Gastrocnemius medialis (tissue), 4 donors: ENCODE measurements at regions of chr17 and their contacts with region 1.

Region 1: DNA sequence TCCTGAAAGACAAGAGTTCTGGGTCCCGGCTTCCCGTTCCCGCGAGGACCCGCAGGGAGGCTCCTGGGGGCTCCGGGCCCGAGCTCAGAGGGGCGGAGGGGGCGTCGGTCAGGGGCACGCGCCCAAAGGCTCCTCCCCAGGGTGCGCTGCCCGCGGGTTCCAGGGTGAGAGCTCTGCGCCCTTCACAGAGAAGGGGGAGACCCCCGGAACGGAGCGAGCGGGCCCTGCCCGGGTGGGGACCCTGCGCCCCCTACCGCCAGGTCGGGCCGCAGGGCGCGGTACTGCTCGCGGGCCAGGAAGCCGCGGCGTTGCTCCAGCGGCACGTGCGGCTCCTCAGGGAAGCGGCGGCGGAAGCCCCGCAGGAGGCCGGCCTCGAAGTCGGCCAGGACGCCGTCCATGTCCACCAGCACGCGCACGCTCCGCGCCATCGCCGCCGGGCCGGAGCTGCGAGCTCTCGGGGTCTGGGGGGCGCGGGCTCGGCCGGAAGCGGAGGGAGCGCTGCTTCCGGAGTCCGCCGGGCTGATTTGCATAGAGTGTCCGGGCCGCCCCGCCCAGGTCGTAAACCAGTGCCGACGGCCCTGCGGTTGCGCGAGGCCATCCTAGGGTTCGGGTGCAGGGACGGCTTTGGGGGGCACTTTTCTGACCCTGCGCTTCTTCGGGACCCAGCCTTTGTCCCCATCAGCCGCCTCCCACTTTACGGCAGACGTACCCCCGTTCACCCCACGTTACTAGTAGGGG is at the start of gene NT5C:
- DNase-seq: peak; percentile 62 to 77
- ATAC-seq: peak; percentile 90 to 91
- H3K4me3 ChIP-seq: peak within 1 kb of the TSS; percentile 78 to 92 (median 90)
- H3K27ac ChIP-seq: peak within 1 kb of the TSS; percentile 86 to 96 (median 90)
- H3K4me1 ChIP-seq: peaks cover 0 to 12% of the 10 kb centered on the region in 2 donors
- H3K27me3 ChIP-seq: no peaks in the 10 kb centered on the region
- CTCF ChIP-seq: peak; percentile 74 to 82 (median 76)
- POLR2A ChIP-seq: peak; percentile 36 to 72
- total RNA-seq, gene NT5C: 62.8 to 111 (median 68.0) TPM

Region 2: GRCh38 chr17:74877592-74878548 is 253.6 kb before region 1 on chr17:
- in situ Hi-C with region 1: no loop called
- intact Hi-C with region 1: no loop called
- DNase-seq: no peak
- ATAC-seq: no peak
- H3K4me3 ChIP-seq: no peak overlapping the region
- H3K27ac ChIP-seq: no peak overlapping the region
- H3K4me1 ChIP-seq: peaks cover 5 to 6% of the 10 kb centered on the region in 2 donors
- H3K27me3 ChIP-seq: no peaks in the 10 kb centered on the region
- CTCF ChIP-seq: no peak
- POLR2A ChIP-seq: no peak

Region 3: DNA sequence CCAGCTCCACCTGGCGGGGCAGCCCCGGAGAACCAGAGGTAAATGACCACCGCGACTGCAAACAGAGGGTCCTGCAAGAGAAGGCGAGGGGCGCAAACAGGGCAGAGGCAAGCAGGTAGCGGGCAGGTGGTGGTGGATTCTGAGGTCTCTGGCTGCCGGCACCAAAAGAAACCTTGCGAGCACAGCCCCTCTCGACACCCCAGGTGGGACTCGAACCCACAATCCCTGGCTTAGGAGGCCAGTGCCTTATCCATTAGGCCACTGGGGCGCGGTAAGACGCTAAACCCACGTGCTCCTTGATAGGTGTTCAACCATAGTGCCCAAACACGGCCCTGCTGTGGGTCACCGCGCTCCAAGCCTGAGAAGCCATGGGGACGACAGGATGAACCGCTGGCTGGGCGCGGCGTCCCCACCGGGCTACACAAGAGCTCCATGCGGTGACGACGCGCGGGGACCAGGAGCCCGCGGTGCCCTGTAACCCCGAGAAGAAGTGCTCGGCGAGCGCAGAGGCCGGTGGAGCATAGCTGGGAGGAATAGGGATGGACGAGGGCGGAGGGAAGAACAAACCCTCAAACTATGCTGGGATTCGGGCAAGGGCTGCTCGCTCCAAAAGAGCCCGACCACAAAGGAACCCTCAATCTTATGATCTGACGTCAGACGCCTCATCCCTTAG is 97.1 kb before region 1 on chr17:
- in situ Hi-C with region 1: no loop called
- intact Hi-C with region 1: no loop called
- DNase-seq: peak; percentile 58 to 77
- ATAC-seq: peak; percentile 64 to 68
- H3K4me3 ChIP-seq: peak overlapping the region; percentile 68 to 81 (median 74)
- H3K27ac ChIP-seq: peak overlapping the region; percentile 79 to 88 (median 85)
- H3K4me1 ChIP-seq: peaks cover 11 to 25% of the 10 kb centered on the region in 2 donors
- H3K27me3 ChIP-seq: no peaks in the 10 kb centered on the region
- CTCF ChIP-seq: peak in 1 of 5 experiments; percentile 14
- POLR2A ChIP-seq: no peak

Region 4: DNA sequence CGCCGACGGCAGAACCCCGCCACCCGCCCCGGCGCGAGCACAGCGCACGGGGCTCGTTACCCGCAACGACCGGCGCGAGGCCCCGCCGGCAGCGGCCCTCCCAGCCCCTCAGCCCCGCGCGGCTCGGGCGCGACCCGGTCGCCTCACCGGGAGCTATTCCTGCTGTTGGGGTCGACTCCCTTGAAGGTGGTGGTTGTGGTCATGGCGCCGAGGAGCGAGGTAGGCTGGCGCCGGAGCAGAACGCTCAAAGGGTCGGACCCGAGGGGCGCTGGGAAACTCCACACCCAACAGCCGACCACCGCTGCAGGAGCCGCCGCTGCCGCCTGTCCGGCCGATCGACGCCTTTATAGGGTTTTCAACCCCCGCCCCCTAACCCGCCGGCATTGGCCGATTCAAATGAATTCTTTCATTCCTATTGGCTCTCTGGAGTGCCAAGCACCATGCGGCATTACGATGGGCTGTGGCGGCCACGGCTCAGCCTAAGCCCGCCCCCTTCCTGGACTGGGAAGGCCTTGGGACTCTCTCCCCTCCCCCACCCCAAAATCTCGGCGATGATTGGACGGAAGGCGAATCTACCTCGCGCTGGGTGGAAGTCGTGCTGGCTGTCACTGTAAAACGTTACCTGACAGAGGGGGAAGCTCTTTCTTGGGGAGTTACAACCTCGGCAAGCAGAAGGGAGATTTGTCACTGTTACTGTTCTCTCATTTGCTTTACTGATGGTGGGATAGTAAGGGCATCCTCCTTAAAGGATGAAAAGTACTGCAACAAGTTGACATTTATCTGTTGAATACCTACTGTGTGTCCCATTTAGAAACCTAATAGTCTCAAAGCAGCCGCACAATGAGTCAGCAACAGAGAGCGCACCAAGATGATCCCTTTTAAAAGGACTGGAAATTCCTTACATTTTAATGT is 23.0 kb after region 1 on chr17 and contains the start of gene JPT1:
- in situ Hi-C with region 1: no loop called
- intact Hi-C with region 1: loop called (anchors 2 kb)
- DNase-seq: peak; percentile 99
- ATAC-seq: peak; percentile 95 to 99
- H3K4me3 ChIP-seq: peak within 1 kb of the TSS; percentile 65 to 83 (median 74)
- H3K27ac ChIP-seq: peak within 1 kb of the TSS; percentile 70 to 89 (median 83)
- H3K4me1 ChIP-seq: peaks cover 19 to 21% of the 10 kb centered on the region in 2 donors
- H3K27me3 ChIP-seq: no peaks in the 10 kb centered on the region
- CTCF ChIP-seq: peak in 2 of 5 experiments; percentile 13 to 22
- POLR2A ChIP-seq: peak; percentile 98 to 100
- total RNA-seq, gene JPT1: 35.5 to 113 (median 71.8) TPM

Region 5: DNA sequence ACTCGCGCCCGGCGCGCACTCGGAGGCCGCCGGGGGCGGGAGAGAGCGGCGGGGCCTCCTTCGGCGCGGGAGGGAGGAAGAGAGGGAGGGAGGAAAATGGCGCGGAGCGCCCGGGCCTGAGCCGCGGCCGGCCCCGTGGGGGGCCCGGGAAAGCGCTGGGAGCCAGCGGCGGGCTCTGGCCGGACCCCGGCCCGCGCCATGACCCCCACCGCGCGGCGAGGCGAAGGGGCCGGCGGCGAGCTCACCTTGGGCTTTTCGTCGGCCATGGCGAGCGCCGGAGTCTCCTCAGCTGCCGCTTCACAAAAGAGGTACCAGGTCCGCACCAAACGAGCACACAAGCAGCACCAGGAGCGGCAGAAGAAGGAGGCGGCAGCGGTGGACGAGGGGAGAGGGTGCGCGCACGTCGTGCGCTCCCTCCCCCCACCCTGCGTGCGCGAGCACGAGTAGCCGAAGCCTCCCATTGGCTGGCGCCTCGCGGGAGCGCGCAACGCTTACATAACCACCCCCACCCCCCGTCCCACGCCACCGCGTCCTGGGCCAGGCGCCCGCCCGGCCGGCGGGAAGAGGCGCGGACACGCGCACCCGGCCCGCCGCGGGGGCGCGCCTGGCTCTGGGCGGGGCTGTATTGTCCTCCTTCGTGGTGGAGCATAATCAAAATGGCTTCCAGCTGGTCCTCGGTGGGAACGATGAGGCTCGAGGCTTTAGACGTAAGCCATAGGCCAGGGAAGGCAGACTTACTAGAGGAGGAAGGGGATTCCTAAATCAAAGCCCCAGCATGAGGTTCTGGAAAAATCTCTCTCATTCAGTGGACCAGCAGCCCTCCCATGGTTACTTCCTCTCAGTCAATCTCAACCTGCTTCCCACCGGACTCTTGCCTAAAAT is 51.4 kb after region 1 on chr17 and contains the start of gene SUMO2:
- in situ Hi-C with region 1: loop called in 1 of 4 experiments (anchors 10 kb)
- intact Hi-C with region 1: loop called (anchors 5 kb)
- DNase-seq: peak; percentile 93 to 96
- ATAC-seq: peak; percentile 93 to 96
- H3K4me3 ChIP-seq: peak within 1 kb of the TSS; percentile 88 to 99 (median 93)
- H3K27ac ChIP-seq: peak within 1 kb of the TSS; percentile 90 to 100 (median 96)
- H3K4me1 ChIP-seq: peaks cover 27 to 28% of the 10 kb centered on the region in 2 donors
- H3K27me3 ChIP-seq: no peaks in the 10 kb centered on the region
- CTCF ChIP-seq: peak in 4 of 5 experiments; percentile 38 to 65 (median 48)
- POLR2A ChIP-seq: peak; percentile 72 to 79
- total RNA-seq, gene SUMO2: 36.7 to 45.1 (median 43.3) TPM